Esophagus squamous epithelium (tissue), 5 donors: ENCODE measurements at regions of chr2 and their contacts with region 1.

Region 1: GRCh38 chr2:131673392-131674173 is 145.9 kb downstream of the CCDC74A start:
- DNase-seq: no peak
- H3K4me3 ChIP-seq: peak overlapping the region; percentile 4 to 63 (median 44)
- H3K27ac ChIP-seq: no peak overlapping the region
- H3K4me1 ChIP-seq: peaks cover 25 to 42% (median 28%) of the 10 kb centered on the region in 3 donors
- H3K27me3 ChIP-seq: peaks cover 0 to 34% (median 0%) of the 10 kb centered on the region in 4 donors
- CTCF ChIP-seq: peak; percentile 74 to 89 (median 85)
- POLR2A ChIP-seq: no peak

Region 2: DNA sequence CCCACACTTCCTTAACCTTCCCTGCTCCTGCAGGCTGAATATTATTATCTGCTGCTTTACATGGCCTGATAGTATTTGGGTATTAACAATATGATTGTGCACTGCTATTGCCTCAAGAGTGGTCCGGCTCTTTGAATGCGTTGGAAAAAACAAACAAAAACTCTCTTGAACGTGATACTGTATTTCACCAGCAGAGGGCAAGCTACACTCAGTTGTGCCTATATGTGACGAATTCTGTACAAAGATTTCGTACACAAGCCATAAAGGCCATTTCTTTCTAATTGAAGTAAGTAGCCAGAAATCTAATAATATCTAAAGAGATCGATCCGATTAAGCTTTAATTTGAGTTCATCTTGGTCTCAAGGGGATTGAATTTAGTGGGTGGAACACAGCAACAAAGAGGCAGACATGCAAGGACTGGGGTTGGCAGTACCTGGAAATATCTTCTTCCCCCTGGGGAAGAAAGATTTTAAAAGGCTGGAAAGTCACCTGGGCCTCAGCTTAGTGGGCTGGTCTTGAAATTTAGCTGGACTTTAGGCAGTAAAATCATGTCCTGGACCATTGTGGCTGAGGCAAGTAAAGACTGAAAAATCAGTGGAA is 260.3 kb before region 1 on chr2:
- intact Hi-C with region 1: loop called (anchors 5 kb)
- DNase-seq: no peak
- H3K4me3 ChIP-seq: no peak overlapping the region
- H3K27ac ChIP-seq: no peak overlapping the region
- H3K4me1 ChIP-seq: no peaks in the 10 kb centered on the region
- H3K27me3 ChIP-seq: peaks cover 0 to 62% (median 0%) of the 10 kb centered on the region in 4 donors
- CTCF ChIP-seq: peak; percentile 54 to 86 (median 72)
- POLR2A ChIP-seq: no peak

Region 3: GRCh38 chr2:131492418-131493198 is 181.0 kb before region 1 on chr2:
- intact Hi-C with region 1: loop called (anchors 5 kb)
- DNase-seq: peak; percentile 74
- H3K4me3 ChIP-seq: peak overlapping the region; percentile 80 to 89 (median 86)
- H3K27ac ChIP-seq: peak overlapping the region; percentile 92 to 95 (median 94)
- H3K4me1 ChIP-seq: peaks cover 23 to 44% (median 24%) of the 10 kb centered on the region in 3 donors
- H3K27me3 ChIP-seq: no peaks in the 10 kb centered on the region
- CTCF ChIP-seq: peak; percentile 66 to 83 (median 72)
- POLR2A ChIP-seq: peak in 2 of 4 donors; percentile 11 to 33

Region 4: DNA sequence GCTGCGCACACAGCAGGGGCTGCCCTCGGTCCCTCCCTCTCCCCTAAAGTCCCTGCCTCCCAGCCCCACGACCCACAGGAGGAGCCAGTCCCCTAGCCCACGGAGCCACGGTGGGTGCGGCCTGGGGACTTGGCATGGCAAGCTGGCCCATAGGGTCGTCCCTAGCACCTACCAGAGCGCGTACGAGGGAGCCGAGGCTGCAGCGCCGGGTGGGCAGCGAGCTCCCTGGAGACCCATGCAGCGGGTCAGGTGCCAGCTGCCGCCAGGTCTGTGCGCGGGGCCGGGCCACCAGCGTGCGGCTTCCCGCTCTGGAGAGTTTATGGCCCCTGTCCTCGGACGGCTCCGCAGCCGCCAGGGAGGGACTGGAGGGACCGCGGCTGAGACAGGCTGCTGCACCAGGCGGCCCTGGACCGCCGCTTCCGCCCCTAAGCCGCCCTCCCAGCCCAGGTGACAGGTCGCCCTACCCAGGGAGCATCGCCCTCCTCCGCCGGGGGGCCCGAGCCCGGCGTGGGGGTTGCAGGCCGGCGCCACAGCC is 127.7 kb after region 1 on chr2:
- intact Hi-C with region 1: loop called (anchors 10 kb)
- DNase-seq: no peak
- H3K4me3 ChIP-seq: peak overlapping the region in 2 of 4 donors; percentile 47 to 58
- H3K27ac ChIP-seq: no peak overlapping the region
- H3K4me1 ChIP-seq: peaks cover 5 to 17% (median 7%) of the 10 kb centered on the region in 3 donors
- H3K27me3 ChIP-seq: peaks cover 0 to 12% (median 0%) of the 10 kb centered on the region in 4 donors
- CTCF ChIP-seq: no peak
- POLR2A ChIP-seq: no peak